ENCODE measurements at regions of chr2 and their contacts with region 1.

Region 1: DNA sequence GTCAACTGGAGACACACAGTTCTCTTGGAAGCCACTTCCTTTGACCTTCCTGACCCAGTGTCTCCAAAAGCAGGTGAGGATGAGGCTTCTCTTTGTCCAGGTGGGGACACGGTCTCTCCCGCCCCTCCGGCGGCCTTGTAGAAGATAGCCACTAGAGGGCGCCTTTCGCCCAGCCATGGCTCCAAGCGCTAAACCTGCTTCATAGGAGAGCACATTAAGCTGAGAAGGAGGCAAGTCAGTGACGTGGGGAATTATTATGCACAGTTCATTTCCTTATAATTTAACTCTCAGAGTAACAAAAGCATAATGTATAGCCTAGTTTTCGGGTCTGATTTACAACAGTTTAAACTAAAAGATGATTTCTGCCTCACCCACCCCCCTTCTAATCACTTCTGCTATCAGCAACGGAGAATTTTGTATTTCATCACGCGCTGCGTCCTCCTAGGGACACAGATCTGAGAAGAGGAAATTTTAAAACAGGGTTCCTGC is 208.7 kb downstream of the ICOS start:
- DNase-seq: peak; percentile 88
- H3K4me3 Mint-ChIP-seq: peak overlapping the region; percentile 65
- H3K27ac Mint-ChIP-seq: peak overlapping the region; percentile 68
- H3K4me1 Mint-ChIP-seq: no peaks in the 10 kb centered on the region
- H3K27me3 Mint-ChIP-seq: peaks cover 54% of the 10 kb centered on the region
- CTCF ChIP-seq: peak; percentile 89

Region 2: GRCh38 chr2:204024503-204024902 is 120.8 kb before region 1 on chr2:
- CTCF ChIA-PET with region 1: no interaction called
- intact Hi-C with region 1: loop called (anchors 10 kb)
- DNase-seq: peak; percentile 44
- H3K4me3 Mint-ChIP-seq: no peak overlapping the region
- H3K27ac Mint-ChIP-seq: no peak overlapping the region
- H3K4me1 Mint-ChIP-seq: peaks cover 3% of the 10 kb centered on the region
- H3K27me3 Mint-ChIP-seq: peaks cover 17% of the 10 kb centered on the region
- CTCF ChIP-seq: peak; percentile 24

Region 3: GRCh38 chr2:204046145-204046544 is 99.2 kb before region 1 on chr2:
- CTCF ChIA-PET with region 1: no interaction called
- intact Hi-C with region 1: no loop called
- DNase-seq: no peak
- H3K4me3 Mint-ChIP-seq: no peak overlapping the region
- H3K27ac Mint-ChIP-seq: no peak overlapping the region
- H3K4me1 Mint-ChIP-seq: no peaks in the 10 kb centered on the region
- H3K27me3 Mint-ChIP-seq: peaks cover 86% of the 10 kb centered on the region
- CTCF ChIP-seq: no peak

Region 4: DNA sequence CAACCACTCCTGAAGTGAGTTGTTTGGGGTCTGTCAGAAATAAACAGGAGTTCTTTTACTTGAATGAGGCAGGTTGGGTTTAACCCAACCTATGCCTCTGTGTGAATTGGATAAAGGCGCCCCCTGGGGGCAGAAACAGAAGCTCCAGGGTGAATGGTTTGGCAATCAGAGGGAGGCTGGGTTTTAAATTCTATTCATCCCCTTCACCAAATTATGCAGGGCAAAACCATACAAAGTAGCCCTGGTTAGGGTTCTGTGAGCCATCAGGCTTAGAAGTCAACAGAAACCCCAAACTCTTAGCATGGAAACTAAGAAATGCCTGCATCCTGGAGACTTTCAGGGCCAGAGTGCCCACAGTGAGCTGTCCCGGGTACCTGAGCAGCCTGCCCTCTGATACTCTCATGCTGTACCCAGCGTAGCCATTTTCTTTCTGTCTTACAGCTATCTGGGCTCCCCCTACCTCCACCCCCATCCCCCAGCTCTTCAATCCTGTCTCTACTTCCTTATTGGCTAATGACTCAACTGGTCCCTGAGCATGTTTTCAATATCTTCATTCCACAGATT is 32.8 kb after region 1 on chr2:
- CTCF ChIA-PET with region 1: interaction called, 9 read pairs
- intact Hi-C with region 1: loop called (anchors 2 kb)
- DNase-seq: peak; percentile 51
- H3K4me3 Mint-ChIP-seq: no peak overlapping the region
- H3K27ac Mint-ChIP-seq: no peak overlapping the region
- H3K4me1 Mint-ChIP-seq: no peaks in the 10 kb centered on the region
- H3K27me3 Mint-ChIP-seq: peaks cover 44% of the 10 kb centered on the region
- CTCF ChIP-seq: peak; percentile 84

Region 5: DNA sequence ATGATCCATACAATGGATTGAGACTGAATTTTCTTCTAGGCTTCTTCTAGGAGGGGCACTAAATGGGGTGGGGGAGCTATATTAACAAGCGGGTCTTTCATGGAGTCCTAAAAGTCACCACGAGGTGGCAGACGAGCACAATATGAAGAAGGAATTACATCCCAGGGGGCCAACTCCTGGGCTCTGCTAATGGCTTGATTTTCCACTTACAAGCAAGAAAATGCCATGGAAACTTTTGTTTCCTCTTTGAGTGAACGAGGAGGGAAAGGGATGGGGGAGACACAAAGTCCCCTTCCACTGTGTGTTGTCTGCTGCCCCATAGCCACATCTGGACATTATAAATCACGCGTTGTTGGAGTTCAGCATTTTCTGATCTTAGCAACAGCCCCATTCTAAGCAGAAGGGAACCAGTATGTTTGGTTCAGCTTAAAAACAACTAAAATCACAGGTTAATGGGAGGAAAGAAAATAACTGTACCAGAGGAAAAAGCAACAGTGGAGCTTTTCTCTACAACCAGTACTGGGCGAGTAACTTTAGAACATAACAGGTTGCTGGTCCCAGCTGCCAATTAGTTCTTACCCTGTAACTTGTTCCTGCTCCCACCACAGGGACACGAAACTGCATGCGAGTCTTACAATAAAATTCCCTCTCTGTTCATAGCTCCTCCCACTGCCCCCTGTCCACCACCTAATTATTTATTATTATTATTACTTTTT is 115.0 kb after region 1 on chr2:
- CTCF ChIA-PET with region 1: interaction called, 9 read pairs
- intact Hi-C with region 1: loop called (anchors 2 kb)
- DNase-seq: peak; percentile 66
- H3K4me3 Mint-ChIP-seq: no peak overlapping the region
- H3K27ac Mint-ChIP-seq: no peak overlapping the region
- H3K4me1 Mint-ChIP-seq: peaks cover 23% of the 10 kb centered on the region
- H3K27me3 Mint-ChIP-seq: no peaks in the 10 kb centered on the region
- CTCF ChIP-seq: peak; percentile 88

Region 6: GRCh38 chr2:204325468-204325867 is 180.2 kb after region 1 on chr2:
- CTCF ChIA-PET with region 1: no interaction called
- intact Hi-C with region 1: loop called (anchors 5 kb)
- DNase-seq: peak; percentile 74
- H3K4me3 Mint-ChIP-seq: no peak overlapping the region
- H3K27ac Mint-ChIP-seq: no peak overlapping the region
- H3K4me1 Mint-ChIP-seq: peaks cover 22% of the 10 kb centered on the region
- H3K27me3 Mint-ChIP-seq: no peaks in the 10 kb centered on the region
- CTCF ChIP-seq: peak; percentile 92

Region 7: GRCh38 chr2:204344119-204344518 is 198.8 kb after region 1 on chr2:
- CTCF ChIA-PET with region 1: no interaction called
- intact Hi-C with region 1: no loop called
- DNase-seq: no peak
- H3K4me3 Mint-ChIP-seq: no peak overlapping the region
- H3K27ac Mint-ChIP-seq: no peak overlapping the region
- H3K4me1 Mint-ChIP-seq: peaks cover 51% of the 10 kb centered on the region
- H3K27me3 Mint-ChIP-seq: no peaks in the 10 kb centered on the region
- CTCF ChIP-seq: no peak

Region 8: DNA sequence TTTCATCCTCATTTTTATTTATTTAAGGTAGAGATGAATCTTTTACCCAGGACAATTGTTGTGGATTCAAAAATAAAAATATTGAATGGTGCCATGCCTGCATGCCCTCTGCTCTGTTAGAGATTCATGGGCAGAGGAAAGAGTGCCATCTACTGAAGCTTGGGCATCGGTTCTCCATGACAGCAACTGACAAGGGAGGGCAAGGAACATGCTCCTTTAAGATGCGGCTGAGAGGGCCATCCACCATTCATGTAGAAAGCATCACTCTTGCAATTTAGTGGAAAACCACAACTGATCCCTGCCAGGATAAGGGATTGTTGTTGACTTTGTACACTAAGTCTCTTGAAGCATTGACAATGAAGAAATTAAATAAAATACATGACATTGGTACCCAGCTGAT is 479.9 kb after region 1 on chr2:
- CTCF ChIA-PET with region 1: no interaction called
- intact Hi-C with region 1: loop called (anchors 2 kb)
- DNase-seq: peak; percentile 24
- H3K4me3 Mint-ChIP-seq: no peak overlapping the region
- H3K27ac Mint-ChIP-seq: no peak overlapping the region
- H3K4me1 Mint-ChIP-seq: no peaks in the 10 kb centered on the region
- H3K27me3 Mint-ChIP-seq: no peaks in the 10 kb centered on the region
- CTCF ChIP-seq: peak; percentile 19

Region 9: GRCh38 chr2:204691911-204692510 is 546.7 kb after region 1 on chr2:
- CTCF ChIA-PET with region 1: interaction called, 4 read pairs
- intact Hi-C with region 1: loop called (anchors 2 kb)
- DNase-seq: peak; percentile 63
- H3K4me3 Mint-ChIP-seq: no peak overlapping the region
- H3K27ac Mint-ChIP-seq: no peak overlapping the region
- H3K4me1 Mint-ChIP-seq: peaks cover 8% of the 10 kb centered on the region
- H3K27me3 Mint-ChIP-seq: no peaks in the 10 kb centered on the region
- CTCF ChIP-seq: peak; percentile 57